ENCODE measurements at regions of chr1 and their contacts with region 1.

Region 1: GRCh38 chr1:231993968-231994455 is 367.4 kb downstream of the DISC1 start:
- DNase-seq: no peak
- ATAC-seq: no peak
- H3K4me3 ChIP-seq: no peak overlapping the region
- H3K4me3 Mint-ChIP-seq: no peak overlapping the region
- H3K27ac ChIP-seq: no peak overlapping the region
- H3K27ac Mint-ChIP-seq: no peak overlapping the region
- H3K4me1 ChIP-seq: no peaks in the 10 kb centered on the region
- H3K4me1 Mint-ChIP-seq: no peaks in the 10 kb centered on the region
- H3K27me3 ChIP-seq: no peaks in the 10 kb centered on the region
- H3K27me3 Mint-ChIP-seq: no peaks in the 10 kb centered on the region
- CTCF ChIP-seq: no peak

Region 2: DNA sequence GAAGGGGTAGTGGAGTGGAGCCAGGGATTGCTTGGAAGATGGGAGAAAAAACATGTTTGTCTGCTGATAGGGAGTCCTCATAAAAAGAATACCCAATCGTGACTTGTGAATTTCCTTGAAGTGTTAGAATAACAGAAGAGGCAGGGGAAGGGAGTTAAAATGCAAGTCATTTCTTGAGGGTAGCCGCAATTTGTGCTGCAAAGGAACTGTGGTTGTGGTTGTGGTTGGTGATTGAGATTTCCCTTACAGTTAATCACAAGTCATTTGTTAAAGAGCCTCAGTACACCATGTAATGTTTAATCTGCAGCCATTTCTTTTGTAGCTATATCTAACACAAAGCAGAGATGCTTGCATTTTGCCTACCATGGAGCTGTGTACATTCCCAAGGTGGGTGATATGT is 533.4 kb before region 1 on chr1:
- CTCF ChIA-PET with region 1: no interaction called
- POLR2A ChIA-PET with region 1: no interaction called
- intact Hi-C with region 1: no loop called
- DNase-seq: peak; percentile 12 to 89 (median 54)
- ATAC-seq: peak; percentile 77
- H3K4me3 ChIP-seq: no peak overlapping the region
- H3K4me3 Mint-ChIP-seq: no peak overlapping the region
- H3K27ac ChIP-seq: no peak overlapping the region
- H3K27ac Mint-ChIP-seq: no peak overlapping the region
- H3K4me1 ChIP-seq: peaks cover 12% of the 10 kb centered on the region
- H3K4me1 Mint-ChIP-seq: peaks cover 17% of the 10 kb centered on the region
- H3K27me3 ChIP-seq: peaks cover 13 to 21% of the 10 kb centered on the region in 2 experiments
- H3K27me3 Mint-ChIP-seq: peaks cover 65% of the 10 kb centered on the region
- CTCF ChIP-seq: no peak

Region 3: GRCh38 chr1:231899713-231900440 is 94.1 kb before region 1 on chr1:
- CTCF ChIA-PET with region 1: no interaction called
- POLR2A ChIA-PET with region 1: no interaction called
- intact Hi-C with region 1: no loop called
- DNase-seq: no peak
- ATAC-seq: no peak
- H3K4me3 ChIP-seq: no peak overlapping the region
- H3K4me3 Mint-ChIP-seq: no peak overlapping the region
- H3K27ac ChIP-seq: no peak overlapping the region
- H3K27ac Mint-ChIP-seq: no peak overlapping the region
- H3K4me1 ChIP-seq: no peaks in the 10 kb centered on the region
- H3K4me1 Mint-ChIP-seq: peaks cover 7% of the 10 kb centered on the region
- H3K27me3 ChIP-seq: no peaks in the 10 kb centered on the region
- H3K27me3 Mint-ChIP-seq: no peaks in the 10 kb centered on the region
- CTCF ChIP-seq: no peak

Region 4: DNA sequence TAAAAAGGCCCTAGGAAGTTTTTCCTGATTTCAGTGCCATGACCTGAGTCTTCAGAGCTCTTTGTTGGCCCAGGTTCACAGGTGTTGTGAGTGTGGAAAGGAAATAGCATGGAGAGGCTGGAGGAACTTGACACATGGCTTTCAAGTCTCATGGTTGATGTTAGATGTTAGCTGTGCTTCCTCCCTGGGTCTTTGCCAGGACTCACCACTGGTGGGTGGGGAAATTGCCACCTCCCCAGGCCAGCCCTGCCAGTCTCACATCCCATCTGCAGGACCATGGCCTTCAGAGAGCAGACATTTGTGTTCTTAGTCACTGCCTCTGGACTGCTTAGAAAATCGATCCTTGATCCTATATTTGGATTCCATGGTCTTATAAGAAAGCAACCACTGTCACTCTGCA is 15.7 kb after region 1 on chr1:
- CTCF ChIA-PET with region 1: no interaction called
- POLR2A ChIA-PET with region 1: no interaction called
- intact Hi-C with region 1: loop called in 1 of 2 experiments (anchors 1 kb)
- DNase-seq: no peak
- ATAC-seq: no peak
- H3K4me3 ChIP-seq: no peak overlapping the region
- H3K4me3 Mint-ChIP-seq: no peak overlapping the region
- H3K27ac ChIP-seq: no peak overlapping the region
- H3K27ac Mint-ChIP-seq: no peak overlapping the region
- H3K4me1 ChIP-seq: no peaks in the 10 kb centered on the region
- H3K4me1 Mint-ChIP-seq: no peaks in the 10 kb centered on the region
- H3K27me3 ChIP-seq: no peaks in the 10 kb centered on the region
- H3K27me3 Mint-ChIP-seq: no peaks in the 10 kb centered on the region
- CTCF ChIP-seq: no peak

Region 5: GRCh38 chr1:232020352-232020751 is 26.3 kb after region 1 on chr1:
- CTCF ChIA-PET with region 1: no interaction called
- POLR2A ChIA-PET with region 1: no interaction called
- intact Hi-C with region 1: no loop called
- DNase-seq: no peak
- ATAC-seq: no peak
- H3K4me3 ChIP-seq: no peak overlapping the region
- H3K4me3 Mint-ChIP-seq: no peak overlapping the region
- H3K27ac ChIP-seq: no peak overlapping the region
- H3K27ac Mint-ChIP-seq: no peak overlapping the region
- H3K4me1 ChIP-seq: no peaks in the 10 kb centered on the region
- H3K4me1 Mint-ChIP-seq: no peaks in the 10 kb centered on the region
- H3K27me3 ChIP-seq: no peaks in the 10 kb centered on the region
- H3K27me3 Mint-ChIP-seq: no peaks in the 10 kb centered on the region
- CTCF ChIP-seq: no peak

Region 6: DNA sequence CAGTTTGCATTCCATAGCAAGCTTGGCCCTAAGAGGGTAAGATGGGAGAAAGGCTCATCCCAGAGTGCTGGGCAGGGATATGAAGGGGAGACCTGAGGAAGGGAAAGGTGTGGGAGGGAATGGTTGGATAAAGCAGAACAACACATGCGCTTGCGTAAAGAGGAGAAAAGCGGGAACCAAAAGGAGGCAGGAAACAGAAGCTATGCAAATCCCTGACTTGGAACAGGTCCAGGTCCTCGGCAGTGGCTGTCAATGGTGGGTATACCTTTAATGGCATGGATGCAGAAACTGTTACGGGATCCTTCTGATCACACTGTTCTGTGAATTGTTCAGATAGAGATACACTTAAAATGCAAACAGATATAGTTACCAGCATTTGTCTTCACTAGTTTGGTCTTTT is 180.3 kb after region 1 on chr1:
- CTCF ChIA-PET with region 1: no interaction called
- POLR2A ChIA-PET with region 1: no interaction called
- intact Hi-C with region 1: no loop called
- DNase-seq: no peak
- ATAC-seq: no peak
- H3K4me3 ChIP-seq: no peak overlapping the region
- H3K4me3 Mint-ChIP-seq: no peak overlapping the region
- H3K27ac ChIP-seq: no peak overlapping the region
- H3K27ac Mint-ChIP-seq: no peak overlapping the region
- H3K4me1 ChIP-seq: no peaks in the 10 kb centered on the region
- H3K4me1 Mint-ChIP-seq: peaks cover 11% of the 10 kb centered on the region
- H3K27me3 ChIP-seq: no peaks in the 10 kb centered on the region
- H3K27me3 Mint-ChIP-seq: peaks cover 18% of the 10 kb centered on the region
- CTCF ChIP-seq: no peak